PC-3 (cell line): ENCODE measurements at regions of chr9 and their contacts with region 1.

Region 1: GRCh38 chr9:127916665-127917613 is at the start of gene ST6GALNAC4:
- DNase-seq: peak; percentile 82
- ATAC-seq: peak; percentile 70
- H3K4me3 ChIP-seq: peak within 1 kb of the TSS; percentile 80
- H3K27ac ChIP-seq: no peak within 1 kb of the TSS
- H3K4me1 ChIP-seq: peaks cover 39% of the 10 kb centered on the region
- H3K27me3 ChIP-seq: no peaks in the 10 kb centered on the region
- CTCF ChIP-seq: no peak
- total RNA-seq, gene ST6GALNAC4: 26.9 and 27.8 TPM in 2 replicates

Region 2: GRCh38 chr9:127545196-127546124 is 371.5 kb before region 1 on chr9:
- CTCF ChIA-PET with region 1: no interaction called
- POLR2A ChIA-PET with region 1: no interaction called
- intact Hi-C with region 1: no loop called
- DNase-seq: peak; percentile 75
- ATAC-seq: peak; percentile 75
- H3K4me3 ChIP-seq: peak overlapping the region; percentile 30; the same call in 1 of the 2 replicates
- H3K27ac ChIP-seq: peak overlapping the region; percentile 82
- H3K4me1 ChIP-seq: peaks cover 36% of the 10 kb centered on the region
- H3K27me3 ChIP-seq: no peaks in the 10 kb centered on the region
- CTCF ChIP-seq: no peak

Region 3: GRCh38 chr9:127578955-127579853 is 337.7 kb before region 1 on chr9:
- CTCF ChIA-PET with region 1: no interaction called
- POLR2A ChIA-PET with region 1: no interaction called
- intact Hi-C with region 1: loop called (anchors 10 kb)
- DNase-seq: peak; percentile 96
- ATAC-seq: peak; percentile 80
- H3K4me3 ChIP-seq: peak overlapping the region; percentile 69
- H3K27ac ChIP-seq: peak overlapping the region; percentile 100
- H3K4me1 ChIP-seq: peaks cover 46% of the 10 kb centered on the region
- H3K27me3 ChIP-seq: no peaks in the 10 kb centered on the region
- CTCF ChIP-seq: peak; percentile 51

Region 4: GRCh38 chr9:127586537-127586936 is 330.4 kb before region 1 on chr9:
- CTCF ChIA-PET with region 1: no interaction called
- POLR2A ChIA-PET with region 1: no interaction called
- intact Hi-C with region 1: loop called (anchors 5 kb)
- DNase-seq: peak; percentile 80
- ATAC-seq: peak; percentile 64
- H3K4me3 ChIP-seq: no peak overlapping the region
- H3K27ac ChIP-seq: no peak overlapping the region
- H3K4me1 ChIP-seq: peaks cover 11% of the 10 kb centered on the region
- H3K27me3 ChIP-seq: no peaks in the 10 kb centered on the region
- CTCF ChIP-seq: peak; percentile 79

Region 5: GRCh38 chr9:127877566-127877998 is 39.4 kb before region 1 on chr9 and contains the start of gene AK1:
- CTCF ChIA-PET with region 1: no interaction called
- POLR2A ChIA-PET with region 1: no interaction called
- intact Hi-C with region 1: loop called (anchors 5 kb)
- DNase-seq: peak; percentile 62
- ATAC-seq: peak; percentile 71
- H3K4me3 ChIP-seq: peak within 1 kb of the TSS; percentile 77
- H3K27ac ChIP-seq: no peak within 1 kb of the TSS
- H3K4me1 ChIP-seq: peaks cover 17% of the 10 kb centered on the region
- H3K27me3 ChIP-seq: no peaks in the 10 kb centered on the region
- CTCF ChIP-seq: no peak
- total RNA-seq, gene AK1: 79.1 and 105 TPM in 2 replicates

Region 6: DNA sequence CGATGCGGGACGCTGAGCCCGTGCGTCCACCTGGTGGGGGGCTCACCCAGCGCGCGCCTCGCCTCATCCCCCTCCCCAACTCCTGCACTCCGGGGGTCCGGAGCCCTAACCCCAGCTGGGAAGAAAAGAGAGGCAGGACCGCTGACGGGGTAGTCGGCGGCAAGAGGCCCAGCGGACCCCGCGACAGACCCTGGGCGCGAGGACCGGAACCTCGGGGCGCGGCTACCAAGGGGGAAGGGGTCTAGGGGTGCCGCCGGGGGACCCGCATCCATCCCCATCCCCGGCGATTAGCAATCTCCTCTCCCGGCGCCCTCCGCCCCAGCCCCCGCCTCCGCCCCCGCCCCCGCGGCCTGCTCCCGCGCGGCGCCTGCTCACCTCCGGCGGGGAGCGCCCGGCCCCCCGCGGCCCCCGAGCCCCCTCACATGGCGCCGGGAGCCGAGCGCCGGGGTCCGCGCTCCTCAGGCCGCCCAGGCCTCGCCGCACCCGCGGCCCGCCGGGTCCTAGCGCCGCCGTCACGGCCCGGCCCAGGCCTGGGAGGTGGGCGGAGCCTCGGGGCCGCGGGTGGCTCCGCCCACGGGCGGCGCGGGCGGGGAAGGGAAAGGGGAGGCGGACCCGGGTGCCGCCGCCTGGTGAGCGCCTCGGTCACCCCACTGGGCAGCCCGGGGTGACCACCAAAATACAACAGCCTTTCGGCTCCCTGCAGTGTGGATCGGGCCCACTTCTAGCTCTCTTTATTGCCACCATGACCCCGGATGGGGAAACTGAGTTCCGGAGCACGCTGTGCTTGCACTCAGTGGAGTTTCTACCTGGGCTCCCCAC is 17.6 kb before region 1 on chr9 and contains the start of gene ST6GALNAC6:
- CTCF ChIA-PET with region 1: no interaction called
- POLR2A ChIA-PET with region 1: no interaction called
- intact Hi-C with region 1: no loop called
- DNase-seq: peak; percentile 68
- ATAC-seq: peak; percentile 84
- H3K4me3 ChIP-seq: peak within 1 kb of the TSS; percentile 84
- H3K27ac ChIP-seq: no peak within 1 kb of the TSS
- H3K4me1 ChIP-seq: peaks cover 5% of the 10 kb centered on the region; the same call in 1 of the 2 replicates
- H3K27me3 ChIP-seq: no peaks in the 10 kb centered on the region
- CTCF ChIP-seq: no peak
- total RNA-seq, gene ST6GALNAC6: 8.5 and 14.5 TPM in 2 replicates

Region 7: GRCh38 chr9:127930231-127931091 is 13.5 kb after region 1 on chr9 and contains the start of gene PIP5KL1:
- CTCF ChIA-PET with region 1: no interaction called
- POLR2A ChIA-PET with region 1: interaction called, 11 read pairs
- intact Hi-C with region 1: no loop called
- DNase-seq: peak; percentile 68
- ATAC-seq: peak; percentile 81
- H3K4me3 ChIP-seq: peak within 1 kb of the TSS; percentile 53
- H3K27ac ChIP-seq: peak within 1 kb of the TSS; percentile 5; the same call in 1 of the 2 replicates
- H3K4me1 ChIP-seq: peaks cover 26% of the 10 kb centered on the region
- H3K27me3 ChIP-seq: no peaks in the 10 kb centered on the region
- CTCF ChIP-seq: no peak
- total RNA-seq, gene PIP5KL1: 5.1 and 5.4 TPM in 2 replicates